Activated CD4-positive, alpha-beta T cell treated with anti-CD3 and anti-CD28 coated beads, Interleukin-2, amount 10 ng/mL, durations not matched to agents 24 days and 14 days (primary cell): ENCODE measurements at regions of chr9 and their contacts with region 1.

Region 1: GRCh38 chr9:20356403-20357035 is 265.8 kb downstream of the MLLT3 start:
- DNase-seq: peak; percentile 85
- H3K4me3 Mint-ChIP-seq: no peak overlapping the region
- H3K27ac Mint-ChIP-seq: peak overlapping the region; percentile 51
- H3K4me1 Mint-ChIP-seq: peaks cover 76% of the 10 kb centered on the region
- H3K27me3 Mint-ChIP-seq: no peaks in the 10 kb centered on the region

Region 2: GRCh38 chr9:19925817-19926503 is 430.6 kb before region 1 on chr9:
- intact Hi-C with region 1: loop called (anchors 1 kb)
- DNase-seq: peak; percentile 95
- H3K4me3 Mint-ChIP-seq: peak overlapping the region; percentile 75
- H3K27ac Mint-ChIP-seq: peak overlapping the region; percentile 58
- H3K4me1 Mint-ChIP-seq: peaks cover 25% of the 10 kb centered on the region
- H3K27me3 Mint-ChIP-seq: peaks cover 10% of the 10 kb centered on the region

Region 3: DNA sequence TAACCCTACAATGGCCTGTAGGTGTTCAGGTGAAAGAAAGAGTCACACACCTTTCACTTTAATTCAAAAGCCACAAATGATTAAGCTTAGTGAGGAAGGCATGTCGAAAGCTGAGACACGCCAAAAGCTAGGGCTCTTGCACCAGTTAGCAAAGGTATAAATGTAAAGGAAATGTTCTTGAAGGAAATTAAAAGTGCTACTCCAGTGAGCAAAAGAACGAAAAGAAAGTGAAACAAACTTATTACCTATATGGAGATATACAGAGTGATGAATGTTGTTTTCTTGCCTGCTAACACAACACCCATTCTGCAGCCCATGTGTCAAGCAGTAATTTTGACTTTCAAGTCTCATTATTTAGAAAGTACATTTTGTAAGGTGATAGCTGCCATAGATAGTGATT is 313.5 kb before region 1 on chr9:
- intact Hi-C with region 1: loop called (anchors 5 kb)
- DNase-seq: peak; percentile 68
- H3K4me3 Mint-ChIP-seq: peak overlapping the region; percentile 61
- H3K27ac Mint-ChIP-seq: peak overlapping the region; percentile 65
- H3K4me1 Mint-ChIP-seq: peaks cover 35% of the 10 kb centered on the region
- H3K27me3 Mint-ChIP-seq: no peaks in the 10 kb centered on the region

Region 4: GRCh38 chr9:20319641-20320337 is 36.7 kb before region 1 on chr9:
- intact Hi-C with region 1: loop called (anchors 1 kb)
- DNase-seq: peak; percentile 80
- H3K4me3 Mint-ChIP-seq: peak overlapping the region; percentile 60
- H3K27ac Mint-ChIP-seq: peak overlapping the region; percentile 94
- H3K4me1 Mint-ChIP-seq: peaks cover 78% of the 10 kb centered on the region
- H3K27me3 Mint-ChIP-seq: no peaks in the 10 kb centered on the region

Region 5: GRCh38 chr9:20508242-20508641 is 151.7 kb after region 1 on chr9:
- intact Hi-C with region 1: loop called (anchors 5 kb)
- DNase-seq: peak; percentile 79
- H3K4me3 Mint-ChIP-seq: peak overlapping the region; percentile 61
- H3K27ac Mint-ChIP-seq: peak overlapping the region; percentile 77
- H3K4me1 Mint-ChIP-seq: peaks cover 67% of the 10 kb centered on the region
- H3K27me3 Mint-ChIP-seq: no peaks in the 10 kb centered on the region

Region 6: GRCh38 chr9:20683351-20684034 is 327.0 kb after region 1 on chr9:
- intact Hi-C with region 1: loop called (anchors 1 kb)
- DNase-seq: peak; percentile 80
- H3K4me3 Mint-ChIP-seq: peak overlapping the region; percentile 90
- H3K27ac Mint-ChIP-seq: peak overlapping the region; percentile 92
- H3K4me1 Mint-ChIP-seq: peaks cover 20% of the 10 kb centered on the region
- H3K27me3 Mint-ChIP-seq: no peaks in the 10 kb centered on the region

Region 7: GRCh38 chr9:20941174-20941690 is 584.7 kb after region 1 on chr9:
- intact Hi-C with region 1: loop called (anchors 2 kb)
- DNase-seq: peak; percentile 88
- H3K4me3 Mint-ChIP-seq: no peak overlapping the region
- H3K27ac Mint-ChIP-seq: no peak overlapping the region
- H3K4me1 Mint-ChIP-seq: peaks cover 3% of the 10 kb centered on the region
- H3K27me3 Mint-ChIP-seq: no peaks in the 10 kb centered on the region